ENCODE measurements at regions of chr20 and their contacts with region 1.

Region 1: DNA sequence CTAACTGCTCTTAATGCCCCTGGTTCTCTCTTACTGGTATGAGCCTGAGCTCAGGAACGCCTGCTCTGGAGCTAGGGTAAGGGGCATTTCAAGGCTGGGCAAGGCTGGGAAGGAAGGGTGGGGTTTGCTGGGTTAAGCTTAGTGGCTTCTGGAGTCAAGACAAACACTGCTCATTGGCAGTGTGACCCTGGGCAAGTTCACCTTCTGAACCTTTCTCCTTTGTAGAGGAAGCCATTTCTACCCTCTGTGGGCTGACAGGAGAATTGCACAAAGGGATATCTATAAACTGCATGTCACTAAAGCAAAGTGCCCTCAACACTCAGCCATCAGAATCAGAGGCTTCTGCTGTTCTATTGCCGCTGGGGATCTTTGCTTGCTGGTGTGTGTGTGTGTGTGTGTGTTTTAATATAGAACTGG is 20.3 kb upstream of the LRRN4 start:
- DNase-seq: no peak
- H3K4me3 ChIP-seq: no peak overlapping the region
- H3K27ac ChIP-seq: no peak overlapping the region
- H3K4me1 ChIP-seq: no peaks in the 10 kb centered on the region
- H3K27me3 ChIP-seq: no peaks in the 10 kb centered on the region
- CTCF ChIP-seq: peak in 1 of 2 experiments; percentile 11

Region 2: GRCh38 chr20:5529331-5530148 is 544.6 kb before region 1 on chr20:
- intact Hi-C with region 1: loop called (anchors 5 kb)
- DNase-seq: peak; percentile 84 to 87
- H3K4me3 ChIP-seq: no peak overlapping the region
- H3K27ac ChIP-seq: no peak overlapping the region
- H3K4me1 ChIP-seq: peaks cover 0 to 13% (median 5%) of the 10 kb centered on the region in 4 donors
- H3K27me3 ChIP-seq: no peaks in the 10 kb centered on the region
- CTCF ChIP-seq: peak; percentile 45 to 60

Region 3: DNA sequence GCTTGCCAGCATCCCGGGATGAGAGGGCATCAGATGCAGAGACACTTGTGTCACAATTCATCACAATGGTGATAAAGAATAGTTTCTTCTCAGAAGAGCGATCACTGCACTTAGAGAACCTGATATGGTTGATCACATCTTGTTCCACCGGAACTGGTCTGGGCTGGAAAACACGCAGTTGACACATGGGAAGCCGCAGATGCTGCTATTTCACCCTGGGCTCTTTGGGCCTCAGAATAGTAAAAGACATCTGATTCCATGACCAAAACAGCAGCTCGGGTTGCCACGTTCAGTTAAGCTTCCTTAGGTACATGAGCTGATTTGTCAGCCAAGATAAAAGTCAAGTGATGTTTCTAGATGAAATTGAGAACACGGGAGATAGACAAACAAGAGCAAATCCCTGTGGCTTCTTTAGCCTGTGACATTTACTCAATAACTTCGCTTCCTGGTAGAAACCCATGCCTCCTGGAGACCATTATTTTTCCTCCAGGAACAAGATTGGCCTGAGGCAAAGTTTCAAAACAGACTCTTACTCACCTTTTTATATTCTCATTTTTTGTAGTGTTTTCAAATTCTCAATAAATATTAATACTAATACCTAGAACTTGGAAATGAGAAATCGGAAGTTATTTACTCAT is 183.3 kb before region 1 on chr20:
- intact Hi-C with region 1: no loop called
- DNase-seq: no peak
- H3K4me3 ChIP-seq: no peak overlapping the region
- H3K27ac ChIP-seq: no peak overlapping the region
- H3K4me1 ChIP-seq: no peaks in the 10 kb centered on the region
- H3K27me3 ChIP-seq: peaks cover 0 to 2% of the 10 kb centered on the region in 2 donors
- CTCF ChIP-seq: no peak

Region 4: DNA sequence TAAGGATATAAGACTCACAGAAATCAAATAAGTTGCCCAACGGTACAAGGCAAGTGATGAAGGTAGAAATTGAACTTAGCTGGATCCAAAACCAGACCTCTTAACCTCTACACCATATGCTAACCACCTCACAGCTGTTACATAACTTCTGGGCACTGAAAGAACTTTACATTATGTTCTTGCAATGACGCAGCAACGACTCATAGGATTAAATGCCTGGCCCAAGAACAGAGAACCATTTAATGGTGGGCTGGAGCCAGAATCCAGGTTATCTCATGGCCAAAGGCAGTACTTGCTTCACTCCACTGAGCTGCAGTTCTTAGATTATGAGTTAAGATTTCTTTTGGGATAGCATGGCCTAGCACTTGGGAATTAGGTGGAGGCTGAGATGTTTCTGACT is 128.2 kb before region 1 on chr20:
- intact Hi-C with region 1: loop called (anchors 10 kb)
- DNase-seq: no peak
- H3K4me3 ChIP-seq: no peak overlapping the region
- H3K27ac ChIP-seq: no peak overlapping the region
- H3K4me1 ChIP-seq: peaks cover 0 to 15% (median 12%) of the 10 kb centered on the region in 4 donors
- H3K27me3 ChIP-seq: no peaks in the 10 kb centered on the region
- CTCF ChIP-seq: no peak

Region 5: DNA sequence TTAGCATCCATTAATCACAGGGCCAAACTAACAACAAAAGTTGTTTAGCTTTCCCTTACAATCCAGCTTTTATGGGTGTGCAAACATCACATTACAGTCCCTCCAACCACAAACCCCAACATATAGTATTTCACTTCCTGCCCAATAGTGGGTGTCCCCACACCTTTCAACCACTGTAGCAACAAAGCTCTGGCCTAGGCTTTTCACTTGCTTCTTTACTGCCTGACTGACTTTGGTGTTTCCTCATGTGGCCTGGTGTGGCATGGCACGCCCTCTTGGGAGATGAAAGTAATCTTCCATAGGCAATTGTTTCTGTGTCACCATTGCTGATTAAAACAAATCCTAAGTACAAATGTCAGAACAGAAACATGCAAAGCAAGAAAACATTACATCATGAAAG is 77.4 kb before region 1 on chr20:
- intact Hi-C with region 1: no loop called
- DNase-seq: no peak
- H3K4me3 ChIP-seq: no peak overlapping the region
- H3K27ac ChIP-seq: no peak overlapping the region
- H3K4me1 ChIP-seq: no peaks in the 10 kb centered on the region
- H3K27me3 ChIP-seq: no peaks in the 10 kb centered on the region
- CTCF ChIP-seq: no peak

Region 6: DNA sequence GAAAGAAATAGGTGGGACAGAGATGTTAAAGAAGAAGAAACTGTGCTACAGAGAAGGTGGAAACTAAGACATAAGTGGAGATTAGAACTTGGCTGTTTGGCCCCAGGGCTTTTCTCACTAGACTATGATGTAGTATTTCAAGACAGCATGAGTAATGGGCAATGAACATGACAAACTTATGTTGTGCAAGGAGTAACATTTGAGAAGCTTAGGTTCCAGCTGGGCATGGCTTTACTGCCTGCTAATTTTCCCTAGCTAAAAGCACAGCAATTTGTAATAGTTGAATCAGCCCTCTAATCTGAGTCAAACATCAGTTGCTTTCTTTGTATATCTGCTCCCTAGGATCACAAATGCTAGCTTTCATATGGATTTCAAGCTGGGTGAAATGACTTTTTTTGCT is 399.0 kb after region 1 on chr20:
- intact Hi-C with region 1: no loop called
- DNase-seq: no peak
- H3K4me3 ChIP-seq: no peak overlapping the region
- H3K27ac ChIP-seq: no peak overlapping the region
- H3K4me1 ChIP-seq: no peaks in the 10 kb centered on the region
- H3K27me3 ChIP-seq: no peaks in the 10 kb centered on the region
- CTCF ChIP-seq: no peak

Measured in tibial artery (tissue), 4 donors.